Activated CD4-positive, alpha-beta T cell treated with anti-CD3 and anti-CD28 coated beads for 36 hours (primary cell): ENCODE measurements at regions of chr15 and their contacts with region 1.

Region 1: DNA sequence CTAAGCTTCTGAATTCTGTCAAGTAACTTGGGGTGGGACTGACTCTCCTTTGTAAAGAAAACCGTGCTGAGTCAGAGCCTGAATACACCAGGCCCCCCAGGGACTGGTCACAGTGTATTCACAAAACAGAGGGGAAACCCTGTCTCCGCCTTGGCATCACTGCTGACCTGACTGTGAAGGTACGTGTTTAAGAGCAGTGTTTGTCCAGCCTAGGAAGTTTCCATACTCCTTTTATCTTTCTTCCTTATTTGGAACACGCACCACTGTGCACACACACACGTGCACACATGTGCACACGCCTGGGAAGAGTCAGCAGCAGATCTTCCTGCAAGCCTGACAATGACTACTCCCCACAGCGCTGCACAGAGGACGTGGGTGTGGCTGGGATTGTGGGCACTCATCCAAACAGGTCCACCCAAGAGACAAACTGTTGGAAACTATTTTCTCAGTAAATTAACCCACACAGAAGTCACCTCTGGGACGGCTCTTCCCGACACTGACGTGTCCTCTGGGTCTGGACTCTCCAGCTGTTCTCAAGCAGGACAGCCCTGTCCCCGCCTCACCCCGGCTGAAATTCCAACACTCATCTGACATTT is 87.7 kb downstream of the ATP10A start:
- DNase-seq: no peak
- ATAC-seq: no peak
- H3K4me3 Mint-ChIP-seq: no peak overlapping the region
- H3K27ac Mint-ChIP-seq: no peak overlapping the region
- H3K4me1 Mint-ChIP-seq: peaks cover 33% of the 10 kb centered on the region
- H3K27me3 Mint-ChIP-seq: no peaks in the 10 kb centered on the region

Region 2: DNA sequence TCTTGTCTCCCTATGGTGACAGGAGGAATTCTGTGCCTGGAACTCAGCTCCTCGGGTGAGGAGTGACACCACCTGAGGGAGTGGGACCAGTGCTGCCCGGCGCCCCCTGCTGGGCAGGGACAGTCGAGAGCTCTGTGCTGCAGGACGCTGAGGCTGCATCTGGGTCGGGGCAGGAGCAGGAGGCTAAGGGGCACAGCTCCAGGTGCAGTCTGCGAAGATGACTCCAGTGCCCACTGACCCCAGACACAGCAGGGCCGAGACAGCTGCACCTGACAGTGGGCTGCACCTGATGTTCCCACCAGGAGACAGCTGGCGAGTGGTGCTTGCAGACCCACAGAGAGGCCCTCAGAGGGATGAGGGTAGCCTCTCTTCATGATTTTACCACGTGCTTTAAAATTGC is 65.2 kb before region 1 on chr15:
- CTCF ChIA-PET with region 1: no interaction called
- POLR2A ChIA-PET with region 1: no interaction called
- intact Hi-C with region 1: loop called in 1 of 2 experiments (anchors 10 kb)
- DNase-seq: peak; percentile 75
- ATAC-seq: peak; percentile 90
- H3K4me3 Mint-ChIP-seq: no peak overlapping the region
- H3K27ac Mint-ChIP-seq: no peak overlapping the region
- H3K4me1 Mint-ChIP-seq: no peaks in the 10 kb centered on the region
- H3K27me3 Mint-ChIP-seq: no peaks in the 10 kb centered on the region